Activated T-helper 2 cell treated with anti-CD3 and anti-CD28 coated beads, Interferon-gamma antibody, Interleukin-2, Interleukin-4, amounts not matched to agents 10 μg/mL and 5 μg/mL and 100 μg/mL, durations not matched to agents 14 hours and 24 hours and 36 hours (primary cell): ENCODE measurements at regions of chr10 and their contacts with region 1.

Region 1: DNA sequence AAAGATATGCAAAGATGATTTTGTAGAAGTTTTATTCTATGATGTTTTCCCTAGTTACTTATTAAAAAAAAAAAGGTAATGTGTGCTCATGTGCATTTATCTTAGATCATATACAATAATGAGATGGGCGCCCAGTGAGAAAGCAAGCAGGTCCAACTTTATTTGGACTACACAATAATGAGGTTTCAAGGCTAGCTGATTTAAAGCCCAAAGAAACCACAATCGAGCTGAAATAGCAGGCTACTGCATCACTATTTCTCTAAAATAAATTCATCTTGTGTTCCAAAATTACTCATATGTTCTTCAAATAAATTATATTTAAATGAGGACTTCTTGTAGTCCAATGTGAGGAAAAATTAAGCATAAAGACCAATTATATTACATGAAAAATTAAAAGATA is 110.1 kb downstream of the JMJD1C start:
- DNase-seq: no peak
- H3K4me3 Mint-ChIP-seq: no peak overlapping the region
- H3K27ac Mint-ChIP-seq: peak overlapping the region; percentile 28
- H3K4me1 Mint-ChIP-seq: peaks cover 17% of the 10 kb centered on the region
- H3K27me3 Mint-ChIP-seq: no peaks in the 10 kb centered on the region

Region 2: DNA sequence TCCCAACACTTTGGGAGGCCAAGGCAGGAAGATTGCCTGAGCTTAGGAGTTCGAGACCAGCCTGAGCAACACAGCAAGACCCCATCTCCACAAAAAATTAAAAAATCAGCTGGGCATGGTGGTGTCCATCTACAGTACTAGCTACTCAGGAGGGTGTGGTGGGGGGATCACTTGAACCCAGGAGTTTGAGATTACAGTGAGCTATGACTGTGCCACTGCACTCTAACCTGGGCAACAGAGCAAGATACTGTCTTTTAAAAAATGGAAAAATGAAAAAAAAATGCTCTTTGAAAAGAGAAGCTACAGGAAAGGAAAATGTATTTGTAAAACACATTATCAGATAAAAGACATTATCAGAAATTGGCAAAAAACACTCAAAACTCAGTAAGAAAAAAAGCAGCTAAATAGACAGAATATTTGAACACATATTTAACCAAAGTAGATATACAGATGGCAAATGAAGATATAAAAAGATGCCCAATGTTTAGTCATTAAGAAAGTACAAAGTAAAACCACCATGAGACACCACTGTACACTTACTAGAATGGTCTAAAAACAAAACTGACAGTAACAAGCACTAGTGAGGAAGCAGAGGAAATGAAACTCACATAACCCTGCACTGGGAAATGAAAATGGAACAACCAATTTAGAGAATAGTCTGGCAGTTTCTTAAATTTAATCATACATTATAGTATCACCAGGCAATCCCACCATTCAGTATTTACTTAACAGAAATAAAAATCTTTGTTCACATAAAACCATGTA is 182.0 kb before region 1 on chr10:
- intact Hi-C with region 1: loop called (anchors 1 kb)
- DNase-seq: no peak
- H3K4me3 Mint-ChIP-seq: no peak overlapping the region
- H3K27ac Mint-ChIP-seq: peak overlapping the region; percentile 29
- H3K4me1 Mint-ChIP-seq: peaks cover 55% of the 10 kb centered on the region
- H3K27me3 Mint-ChIP-seq: no peaks in the 10 kb centered on the region

Region 3: DNA sequence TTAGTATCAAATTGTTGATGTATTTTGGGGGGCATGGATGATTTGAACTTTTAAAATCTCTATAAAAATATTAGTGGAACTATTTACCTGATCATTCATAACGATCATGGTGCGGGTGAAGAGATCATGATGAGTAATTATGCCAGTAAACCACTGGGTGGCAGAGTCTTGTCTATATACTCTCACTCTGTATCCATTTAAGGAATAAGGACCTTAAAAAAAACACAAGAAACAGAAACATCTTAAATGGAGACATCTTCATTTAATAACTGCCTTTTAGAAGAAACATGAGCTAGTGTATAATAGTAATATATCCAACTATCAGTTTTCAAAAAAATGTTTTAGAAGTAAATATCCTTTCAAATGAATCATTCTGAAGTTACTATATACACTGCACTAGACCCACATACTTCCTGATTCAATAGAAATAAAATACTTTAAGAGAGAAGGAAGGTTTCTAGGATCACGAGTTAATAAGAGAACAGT is 138.5 kb before region 1 on chr10:
- intact Hi-C with region 1: loop called (anchors 10 kb)
- DNase-seq: no peak
- H3K4me3 Mint-ChIP-seq: no peak overlapping the region
- H3K27ac Mint-ChIP-seq: no peak overlapping the region
- H3K4me1 Mint-ChIP-seq: peaks cover 39% of the 10 kb centered on the region
- H3K27me3 Mint-ChIP-seq: no peaks in the 10 kb centered on the region

Region 4: DNA sequence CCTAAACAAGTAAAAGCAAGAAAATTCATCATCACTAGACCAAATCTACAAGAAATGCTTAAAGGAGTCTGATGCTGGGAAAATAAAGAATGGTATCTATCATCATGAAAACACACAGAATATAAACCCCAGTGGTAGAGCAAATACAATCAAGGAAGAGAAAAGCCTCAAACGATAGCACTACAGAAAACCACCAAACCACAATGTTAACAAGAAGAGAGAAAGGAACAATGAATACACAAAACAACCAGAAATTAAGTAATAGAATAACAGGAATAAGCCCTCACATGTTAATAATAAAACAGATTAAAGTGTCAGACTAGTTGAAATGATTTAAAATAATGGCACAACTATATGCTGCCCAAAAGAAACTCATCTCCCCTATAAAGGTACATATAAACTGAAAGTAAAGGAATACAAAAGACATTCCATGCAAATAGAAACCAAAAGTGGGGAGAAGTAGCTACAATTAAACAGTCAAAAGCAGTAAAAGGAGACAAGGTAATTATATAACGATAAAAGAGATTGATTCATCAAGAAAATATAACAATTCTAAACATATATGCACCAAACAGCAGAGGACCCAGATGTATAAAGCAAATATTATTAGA is 32.8 kb after region 1 on chr10:
- intact Hi-C with region 1: loop called (anchors 2 kb)
- DNase-seq: no peak
- H3K4me3 Mint-ChIP-seq: peak overlapping the region; percentile 61
- H3K27ac Mint-ChIP-seq: peak overlapping the region; percentile 45
- H3K4me1 Mint-ChIP-seq: peaks cover 42% of the 10 kb centered on the region
- H3K27me3 Mint-ChIP-seq: peaks cover 2% of the 10 kb centered on the region

Region 5: DNA sequence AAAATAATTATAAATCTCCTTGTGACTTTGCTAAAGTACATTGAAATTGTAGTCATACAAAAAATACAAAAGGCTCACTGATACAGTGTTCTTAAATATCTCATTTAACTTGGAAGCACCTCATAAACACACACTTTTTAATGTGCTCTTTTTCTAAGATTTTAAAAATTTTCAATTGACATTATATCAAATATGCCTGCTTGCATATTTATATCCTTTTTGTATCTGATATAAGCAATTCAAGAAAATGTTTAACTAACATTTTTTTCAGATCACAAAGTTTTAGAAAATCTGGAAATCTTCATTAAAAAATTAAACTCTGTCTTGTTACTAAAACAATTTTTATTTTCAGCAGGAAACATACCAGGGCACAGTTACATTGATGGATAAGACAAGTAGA is 827.0 kb after region 1 on chr10:
- intact Hi-C with region 1: no loop called
- DNase-seq: no peak
- H3K4me3 Mint-ChIP-seq: no peak overlapping the region
- H3K27ac Mint-ChIP-seq: no peak overlapping the region
- H3K4me1 Mint-ChIP-seq: no peaks in the 10 kb centered on the region
- H3K27me3 Mint-ChIP-seq: no peaks in the 10 kb centered on the region